ENCODE measurements at regions of chr1 and their contacts with region 1.

Region 1: GRCh38 chr1:176073524-176074157 is 133.4 kb downstream of the COP1 start:
- DNase-seq: peak; percentile 77
- H3K4me3 ChIP-seq: no peak overlapping the region
- H3K27ac ChIP-seq: no peak overlapping the region
- H3K4me1 ChIP-seq: no peaks in the 10 kb centered on the region
- H3K27me3 ChIP-seq: no peaks in the 10 kb centered on the region
- CTCF ChIP-seq: peak; percentile 77

Region 2: GRCh38 chr1:175742790-175743459 is 330.7 kb before region 1 on chr1:
- CTCF ChIA-PET with region 1: no interaction called
- POLR2A ChIA-PET with region 1: no interaction called
- intact Hi-C with region 1: loop called (anchors 10 kb)
- DNase-seq: peak; percentile 59
- H3K4me3 ChIP-seq: no peak overlapping the region
- H3K27ac ChIP-seq: no peak overlapping the region
- H3K4me1 ChIP-seq: no peaks in the 10 kb centered on the region
- H3K27me3 ChIP-seq: peaks cover 21% of the 10 kb centered on the region
- CTCF ChIP-seq: no peak

Region 3: GRCh38 chr1:175893192-175893591 is 180.4 kb before region 1 on chr1:
- CTCF ChIA-PET with region 1: no interaction called
- POLR2A ChIA-PET with region 1: no interaction called
- intact Hi-C with region 1: loop called (anchors 10 kb)
- DNase-seq: no peak
- H3K4me3 ChIP-seq: no peak overlapping the region
- H3K27ac ChIP-seq: no peak overlapping the region
- H3K4me1 ChIP-seq: no peaks in the 10 kb centered on the region
- H3K27me3 ChIP-seq: no peaks in the 10 kb centered on the region
- CTCF ChIP-seq: no peak

Region 4: GRCh38 chr1:175941164-175941563 is 132.5 kb before region 1 on chr1:
- CTCF ChIA-PET with region 1: no interaction called
- POLR2A ChIA-PET with region 1: no interaction called
- intact Hi-C with region 1: no loop called
- DNase-seq: no peak
- H3K4me3 ChIP-seq: no peak overlapping the region
- H3K27ac ChIP-seq: no peak overlapping the region
- H3K4me1 ChIP-seq: no peaks in the 10 kb centered on the region
- H3K27me3 ChIP-seq: no peaks in the 10 kb centered on the region
- CTCF ChIP-seq: no peak

Region 5: GRCh38 chr1:175984813-175985212 is 88.8 kb before region 1 on chr1:
- CTCF ChIA-PET with region 1: no interaction called
- POLR2A ChIA-PET with region 1: no interaction called
- intact Hi-C with region 1: no loop called
- DNase-seq: no peak
- H3K4me3 ChIP-seq: no peak overlapping the region
- H3K27ac ChIP-seq: no peak overlapping the region
- H3K4me1 ChIP-seq: no peaks in the 10 kb centered on the region
- H3K27me3 ChIP-seq: no peaks in the 10 kb centered on the region
- CTCF ChIP-seq: no peak

Region 6: GRCh38 chr1:176033881-176034280 is 39.8 kb before region 1 on chr1:
- CTCF ChIA-PET with region 1: no interaction called
- POLR2A ChIA-PET with region 1: no interaction called
- intact Hi-C with region 1: no loop called
- DNase-seq: no peak
- H3K4me3 ChIP-seq: no peak overlapping the region
- H3K27ac ChIP-seq: no peak overlapping the region
- H3K4me1 ChIP-seq: no peaks in the 10 kb centered on the region
- H3K27me3 ChIP-seq: no peaks in the 10 kb centered on the region
- CTCF ChIP-seq: no peak

Measured in A673 (cell line).